ENCODE measurements at regions of chr17 and their contacts with region 1.

Region 1: GRCh38 chr17:78133971-78134898 is 3.7 kb downstream of the TMC8 start:
- DNase-seq: peak; percentile 12
- ATAC-seq: no peak
- H3K4me3 ChIP-seq: no peak overlapping the region
- H3K27ac ChIP-seq: no peak overlapping the region
- H3K4me1 ChIP-seq: no peaks in the 10 kb centered on the region
- H3K27me3 ChIP-seq: peaks cover 61% of the 10 kb centered on the region
- CTCF ChIP-seq: peak; percentile 37
- POLR2A ChIP-seq: no peak
- RAD21 ChIP-seq: peak; percentile 13; the same call in 1 of the 2 replicates

Region 2: DNA sequence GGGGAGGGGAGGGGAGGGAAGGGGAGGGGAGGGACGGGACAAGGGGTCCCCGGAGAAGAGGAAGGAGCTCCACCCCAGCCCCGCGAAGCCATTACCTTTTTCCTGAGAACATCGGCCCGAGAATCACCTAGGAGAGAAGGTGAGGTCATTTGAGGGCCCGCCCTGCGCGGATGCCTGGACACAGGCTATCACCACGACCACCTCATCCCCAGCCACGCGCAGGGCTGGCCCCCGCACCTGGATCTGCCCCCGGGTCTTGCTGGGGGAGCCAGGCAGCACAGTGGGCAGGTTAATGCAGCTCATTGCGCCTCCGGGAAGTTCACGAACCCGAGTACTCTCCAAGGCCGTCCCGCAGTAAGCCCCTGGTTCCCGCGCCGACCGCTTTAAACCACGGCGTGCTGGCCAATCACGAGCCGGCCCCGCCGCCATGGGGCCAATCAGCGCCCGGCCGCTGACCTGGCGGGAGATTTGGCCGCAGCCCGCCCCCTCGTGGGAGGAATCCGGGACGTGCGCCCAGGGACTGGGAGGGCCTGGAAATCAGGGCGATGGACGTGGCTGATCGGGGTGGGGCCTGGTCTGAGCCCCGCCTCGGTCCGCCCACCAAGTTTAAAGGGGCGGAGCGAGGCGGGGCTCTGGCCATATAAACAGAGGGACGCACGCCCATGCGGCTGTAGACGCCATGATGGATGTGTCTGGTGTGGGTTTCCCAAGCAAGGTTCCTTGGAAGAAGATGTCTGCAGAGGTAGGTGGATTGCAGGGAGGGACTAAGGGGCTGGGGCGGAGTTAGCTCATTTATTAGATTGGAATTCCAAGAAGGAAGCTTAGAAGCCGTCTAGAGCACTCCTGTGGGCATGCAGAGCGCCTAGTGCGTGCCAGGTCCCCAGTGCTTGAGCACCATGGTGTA is 52.7 kb after region 1 on chr17 and contains the starts of genes AFMID and TK1:
- CTCF ChIA-PET with region 1: no interaction called
- POLR2A ChIA-PET with region 1: no interaction called
- dilution Hi-C with region 1: no loop called
- in situ Hi-C with region 1: no loop called
- intact Hi-C with region 1: loop called (anchors 1 kb)
- DNase-seq: peak; percentile 95
- ATAC-seq: peak; percentile 99
- H3K4me3 ChIP-seq: peak within 1 kb of the TSS; percentile 64
- H3K27ac ChIP-seq: peak within 1 kb of the TSS; percentile 41; the same call in 1 of the 2 replicates
- H3K4me1 ChIP-seq: peaks cover 3% of the 10 kb centered on the region
- H3K27me3 ChIP-seq: no peaks in the 10 kb centered on the region
- CTCF ChIP-seq: peak; percentile 97
- POLR2A ChIP-seq: peak; percentile 82
- RAD21 ChIP-seq: no peak
- total RNA-seq, gene AFMID: 45.5 and 65.1 TPM in 2 replicates
- total RNA-seq, gene TK1: 109 and 219 TPM in 2 replicates

Region 3: DNA sequence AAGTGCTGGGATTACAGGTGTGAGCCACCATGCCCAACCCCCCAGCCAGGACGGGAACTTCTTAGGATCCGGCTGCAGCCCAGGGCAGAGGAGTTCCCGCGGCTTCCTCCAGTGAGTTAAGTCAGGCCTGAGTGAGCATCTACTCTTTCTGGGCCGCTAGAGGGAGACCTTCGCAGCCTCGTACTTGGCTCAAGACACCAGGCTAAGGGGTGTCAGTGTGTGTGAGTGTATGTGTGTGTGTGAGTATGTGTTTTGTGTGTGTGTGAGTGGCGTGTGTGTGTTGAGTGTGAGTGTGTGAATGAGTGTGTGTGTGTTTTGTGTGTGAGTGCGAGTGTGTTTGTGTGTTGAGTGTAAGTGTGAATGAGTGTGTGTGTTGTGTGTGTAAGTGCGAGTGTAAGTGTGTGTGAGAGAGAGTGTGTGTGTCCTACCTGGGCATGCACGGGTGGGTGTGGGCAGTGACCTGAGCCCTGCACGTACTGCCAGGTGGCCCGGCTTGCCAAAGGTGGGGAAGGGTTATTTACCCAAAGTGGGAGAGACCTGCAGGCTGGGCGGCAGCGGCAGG is 155.6 kb after region 1 on chr17:
- CTCF ChIA-PET with region 1: no interaction called
- POLR2A ChIA-PET with region 1: no interaction called
- dilution Hi-C with region 1: no loop called
- in situ Hi-C with region 1: no loop called
- intact Hi-C with region 1: no loop called
- DNase-seq: peak; percentile 92
- ATAC-seq: peak; percentile 100
- H3K4me3 ChIP-seq: no peak overlapping the region
- H3K27ac ChIP-seq: no peak overlapping the region
- H3K4me1 ChIP-seq: peaks cover 3% of the 10 kb centered on the region; the same call in 1 of the 2 replicates
- H3K27me3 ChIP-seq: no peaks in the 10 kb centered on the region
- CTCF ChIP-seq: peak; percentile 83
- POLR2A ChIP-seq: 0 out of 2 replicates have a peak, but pooled peaks have one; percentile 37
- RAD21 ChIP-seq: peak; percentile 95

Measured in IMR-90 (cell line).